ENCODE measurements at regions of chr2 and their contacts with region 1.

Region 1: DNA sequence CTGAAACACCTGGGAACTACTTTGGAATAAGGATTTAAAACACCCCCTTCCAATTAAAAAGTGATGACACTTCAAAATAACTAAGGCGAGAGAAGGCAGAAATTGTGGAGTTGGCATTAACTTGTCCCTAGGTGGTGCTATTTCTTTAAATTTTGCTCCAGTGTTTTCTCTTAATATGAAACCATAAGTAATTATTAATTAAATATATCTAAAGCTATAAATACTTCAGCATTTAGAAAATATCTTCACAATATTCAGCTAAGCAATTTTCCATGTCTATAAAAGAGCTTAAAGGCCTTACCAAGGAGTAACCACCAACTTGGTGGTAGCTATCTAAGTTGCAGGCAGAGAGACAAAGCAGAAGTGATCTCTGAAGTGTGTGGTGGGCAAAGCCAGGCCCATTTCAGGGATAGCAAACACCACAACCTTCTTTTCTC is 186.8 kb upstream of the PGAP1 start:
- DNase-seq: peak in 2 of 35 experiments; percentile 15 to 68
- ATAC-seq: peak in 3 of 4 experiments; percentile 31 to 64 (median 47)
- H3K4me3 ChIP-seq: no peak overlapping the region
- H3K4me3 Mint-ChIP-seq: no peak overlapping the region
- H3K27ac ChIP-seq: peak overlapping the region; percentile 11
- H3K27ac Mint-ChIP-seq: peak overlapping the region; percentile 87 to 89
- H3K4me1 ChIP-seq: peaks cover 6 to 16% of the 10 kb centered on the region in 2 experiments
- H3K4me1 Mint-ChIP-seq: peaks cover 33 to 39% (median 35%) of the 10 kb centered on the region in 3 donors
- H3K27me3 ChIP-seq: no peaks in the 10 kb centered on the region
- H3K27me3 Mint-ChIP-seq: no peaks in the 10 kb centered on the region

Region 2: GRCh38 chr2:197130318-197130717 is 17.0 kb after region 1 on chr2:
- CTCF ChIA-PET with region 1: interaction called, 10 to 16 read pairs
- POLR2A ChIA-PET with region 1: interaction called, 3 to 4 read pairs
- DNase-seq: peak in 9 of 35 experiments; percentile 13 to 59 (median 21)
- ATAC-seq: peak; percentile 88 to 95 (median 92)
- H3K4me3 ChIP-seq: no peak overlapping the region
- H3K4me3 Mint-ChIP-seq: peak overlapping the region; percentile 0 to 53 (median 2)
- H3K27ac ChIP-seq: peak overlapping the region; percentile 56
- H3K27ac Mint-ChIP-seq: peak overlapping the region; percentile 72 to 81
- H3K4me1 ChIP-seq: peaks cover 21 to 48% of the 10 kb centered on the region in 2 experiments
- H3K4me1 Mint-ChIP-seq: peaks cover 81 to 84% (median 83%) of the 10 kb centered on the region in 3 donors
- H3K27me3 ChIP-seq: no peaks in the 10 kb centered on the region
- H3K27me3 Mint-ChIP-seq: no peaks in the 10 kb centered on the region

Region 3: DNA sequence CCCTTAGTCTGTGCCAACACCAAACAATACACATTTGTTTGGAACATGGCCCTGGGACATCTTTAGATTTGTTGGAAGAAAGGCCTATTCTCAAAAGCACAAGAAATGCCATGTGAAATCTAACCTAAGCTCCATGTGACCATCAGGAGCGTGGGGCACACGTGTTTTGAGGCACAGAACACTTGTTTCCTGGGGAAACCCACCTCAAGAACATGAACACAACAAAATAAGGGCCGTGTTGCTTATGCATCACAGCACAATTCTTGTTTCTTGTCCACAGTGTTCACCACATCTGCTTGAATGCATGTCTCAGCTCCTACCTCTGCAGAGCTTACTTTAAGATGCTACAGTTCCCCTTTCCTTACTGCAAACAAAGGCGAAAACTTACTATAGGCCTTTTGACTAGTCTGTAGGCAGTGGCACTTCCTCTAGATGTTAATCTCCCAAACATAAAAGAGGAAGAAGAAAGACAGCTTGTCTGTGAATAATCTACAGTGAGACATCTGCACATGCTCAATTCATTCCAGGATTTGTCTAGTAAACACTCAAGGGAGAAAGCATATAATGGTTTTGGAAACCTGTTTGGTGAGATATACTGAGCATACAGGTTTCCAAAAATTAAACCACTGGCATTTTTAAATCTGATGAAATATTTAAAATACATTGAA is 32.3 kb after region 1 on chr2:
- CTCF ChIA-PET with region 1: interaction called, 10 to 14 read pairs
- POLR2A ChIA-PET with region 1: no interaction called
- DNase-seq: peak in 25 of 35 experiments; percentile 4 to 67 (median 22)
- ATAC-seq: peak; percentile 91 to 94 (median 93)
- H3K4me3 ChIP-seq: no peak overlapping the region
- H3K4me3 Mint-ChIP-seq: peak overlapping the region in 2 of 3 donors; percentile 13 to 44
- H3K27ac ChIP-seq: peak overlapping the region; percentile 66
- H3K27ac Mint-ChIP-seq: peak overlapping the region; percentile 90 to 95
- H3K4me1 ChIP-seq: peaks cover 45 to 61% of the 10 kb centered on the region in 2 experiments
- H3K4me1 Mint-ChIP-seq: peaks cover 82 to 87% (median 84%) of the 10 kb centered on the region in 3 donors
- H3K27me3 ChIP-seq: no peaks in the 10 kb centered on the region
- H3K27me3 Mint-ChIP-seq: no peaks in the 10 kb centered on the region

Region 4: GRCh38 chr2:197168705-197169104 is 55.4 kb after region 1 on chr2:
- CTCF ChIA-PET with region 1: interaction called, 44 to 50 read pairs
- POLR2A ChIA-PET with region 1: interaction called in 1 of 2 experiments, 4 read pairs
- DNase-seq: peak; percentile 36 to 82 (median 65)
- ATAC-seq: peak; percentile 69 to 86 (median 72)
- H3K4me3 ChIP-seq: no peak overlapping the region
- H3K4me3 Mint-ChIP-seq: peak overlapping the region in 1 of 3 donors; percentile 9
- H3K27ac ChIP-seq: peak overlapping the region; percentile 16
- H3K27ac Mint-ChIP-seq: peak overlapping the region; percentile 72
- H3K4me1 ChIP-seq: peaks cover 9 to 42% of the 10 kb centered on the region in 2 experiments
- H3K4me1 Mint-ChIP-seq: peaks cover 73 to 88% (median 80%) of the 10 kb centered on the region in 3 donors
- H3K27me3 ChIP-seq: no peaks in the 10 kb centered on the region
- H3K27me3 Mint-ChIP-seq: no peaks in the 10 kb centered on the region

Region 5: GRCh38 chr2:197198890-197199289 is 85.6 kb after region 1 on chr2:
- CTCF ChIA-PET with region 1: interaction called, 7 to 14 read pairs
- POLR2A ChIA-PET with region 1: no interaction called
- DNase-seq: peak; percentile 68 to 98 (median 90)
- ATAC-seq: peak; percentile 88 to 93 (median 92)
- H3K4me3 ChIP-seq: peak overlapping the region; percentile 56 to 79
- H3K4me3 Mint-ChIP-seq: peak overlapping the region; percentile 84 to 91 (median 90)
- H3K27ac ChIP-seq: peak overlapping the region; percentile 95
- H3K27ac Mint-ChIP-seq: peak overlapping the region; percentile 96 to 99
- H3K4me1 ChIP-seq: peaks cover 52 to 69% of the 10 kb centered on the region in 2 experiments
- H3K4me1 Mint-ChIP-seq: peaks cover 90 to 94% (median 91%) of the 10 kb centered on the region in 3 donors
- H3K27me3 ChIP-seq: no peaks in the 10 kb centered on the region
- H3K27me3 Mint-ChIP-seq: no peaks in the 10 kb centered on the region

Region 6: GRCh38 chr2:197378494-197379307 is 265.4 kb after region 1 on chr2:
- CTCF ChIA-PET with region 1: interaction called, 20 to 28 read pairs
- POLR2A ChIA-PET with region 1: no interaction called
- DNase-seq: peak; percentile 22 to 79 (median 50)
- ATAC-seq: peak; percentile 44 to 77 (median 58)
- H3K4me3 ChIP-seq: no peak overlapping the region
- H3K4me3 Mint-ChIP-seq: no peak overlapping the region
- H3K27ac ChIP-seq: no peak overlapping the region
- H3K27ac Mint-ChIP-seq: peak overlapping the region in 1 of 2 donors; percentile 3
- H3K4me1 ChIP-seq: peaks cover 0 to 3% of the 10 kb centered on the region in 2 experiments
- H3K4me1 Mint-ChIP-seq: peaks cover 13 to 15% (median 14%) of the 10 kb centered on the region in 3 donors
- H3K27me3 ChIP-seq: peaks cover 0 to 4% of the 10 kb centered on the region in 2 experiments
- H3K27me3 Mint-ChIP-seq: peaks cover 0 to 3% of the 10 kb centered on the region in 2 donors